ENCODE measurements at regions of chr12 and their contacts with region 1.

Region 1: DNA sequence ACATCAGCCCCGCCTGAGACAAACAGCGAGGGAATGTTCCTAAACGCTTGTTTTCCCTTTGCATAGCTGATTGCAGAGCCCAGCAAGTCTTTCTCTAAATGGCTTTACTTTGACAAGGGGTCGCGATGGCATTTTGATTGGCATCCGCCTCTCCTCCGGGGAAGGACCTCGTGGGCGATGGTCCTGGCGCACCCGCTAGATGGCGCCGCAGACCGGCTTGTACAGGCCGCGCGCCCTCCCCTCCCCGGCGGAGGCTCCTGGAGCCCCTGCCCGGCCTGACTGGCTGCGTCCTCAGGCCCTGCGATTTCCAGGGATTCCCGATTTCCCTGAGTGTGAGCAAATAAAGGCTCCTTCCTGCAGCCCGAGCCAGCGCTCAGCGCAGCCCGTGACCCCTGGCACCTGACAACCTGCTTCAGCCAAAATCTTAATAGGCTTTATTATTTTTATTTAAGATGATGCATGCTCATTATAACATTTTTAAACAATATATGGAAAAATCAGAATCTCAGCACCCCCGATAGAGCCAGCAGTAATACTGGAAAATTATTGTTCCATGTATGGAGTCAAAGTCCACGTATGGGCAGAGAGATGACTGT is 468.3 kb downstream of the AACS start:
- DNase-seq: peak; percentile 25
- H3K4me3 ChIP-seq: no peak overlapping the region
- H3K27ac ChIP-seq: no peak overlapping the region
- H3K4me1 ChIP-seq: no peaks in the 10 kb centered on the region
- H3K27me3 ChIP-seq: no peaks in the 10 kb centered on the region
- CTCF ChIP-seq: peak; percentile 84

Region 2: GRCh38 chr12:125172231-125172850 is 361.2 kb before region 1 on chr12:
- intact Hi-C with region 1: no loop called
- DNase-seq: no peak
- H3K4me3 ChIP-seq: no peak overlapping the region
- H3K27ac ChIP-seq: no peak overlapping the region
- H3K4me1 ChIP-seq: no peaks in the 10 kb centered on the region
- H3K27me3 ChIP-seq: no peaks in the 10 kb centered on the region
- CTCF ChIP-seq: no peak

Region 3: DNA sequence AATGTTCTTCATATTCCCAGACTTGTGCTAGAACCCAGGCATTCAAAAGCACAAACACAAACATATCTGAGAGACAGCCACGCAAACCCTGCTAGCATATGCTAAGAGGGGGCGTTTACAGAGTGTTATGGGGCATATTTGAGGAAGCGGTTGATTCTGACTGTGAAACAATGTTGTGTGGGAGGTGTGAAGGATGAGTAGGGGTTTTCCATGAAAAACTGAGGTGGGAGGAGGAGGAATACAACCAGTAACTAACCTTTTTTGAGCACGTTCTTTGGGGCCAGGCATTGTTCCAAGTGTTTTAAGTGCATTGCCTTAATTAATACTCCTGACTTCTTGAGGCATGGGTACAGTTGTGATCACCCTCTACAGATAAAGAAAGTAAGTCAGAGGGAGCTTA is 31.2 kb after region 1 on chr12:
- intact Hi-C with region 1: no loop called
- DNase-seq: no peak
- H3K4me3 ChIP-seq: no peak overlapping the region
- H3K27ac ChIP-seq: no peak overlapping the region
- H3K4me1 ChIP-seq: no peaks in the 10 kb centered on the region
- H3K27me3 ChIP-seq: no peaks in the 10 kb centered on the region
- CTCF ChIP-seq: no peak

Region 4: DNA sequence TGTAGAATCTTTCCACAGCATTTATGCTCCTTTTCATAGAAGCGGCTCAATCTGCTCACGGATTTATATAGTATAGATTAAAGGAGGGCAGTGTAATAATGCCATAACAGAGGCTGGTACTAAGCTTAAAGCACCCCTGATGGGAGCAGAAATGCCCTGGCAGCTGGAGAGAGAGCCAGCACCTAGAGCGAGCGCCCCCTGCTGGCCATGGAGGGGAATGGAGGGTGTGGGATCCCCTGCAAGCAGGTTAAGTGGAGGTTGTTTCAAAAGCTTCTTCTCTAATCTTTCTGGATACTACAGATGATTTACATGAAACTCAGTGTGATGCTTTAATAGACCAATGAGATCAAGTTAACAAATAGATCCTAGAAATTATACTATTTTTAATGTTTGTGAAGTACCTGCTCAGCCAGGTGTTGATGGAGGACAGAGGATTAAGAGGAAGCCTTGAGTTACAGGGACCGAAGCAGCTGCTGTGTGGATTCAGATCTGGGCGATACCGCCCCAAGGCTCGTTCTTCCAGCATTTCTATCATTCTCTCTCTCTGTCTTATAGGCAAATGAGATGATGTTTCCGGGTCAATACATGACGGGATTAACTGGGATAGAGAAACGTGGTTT is 1214.1 kb after region 1 on chr12:
- intact Hi-C with region 1: loop called (anchors 5 kb)
- DNase-seq: peak; percentile 34
- H3K4me3 ChIP-seq: no peak overlapping the region
- H3K27ac ChIP-seq: no peak overlapping the region
- H3K4me1 ChIP-seq: no peaks in the 10 kb centered on the region
- H3K27me3 ChIP-seq: no peaks in the 10 kb centered on the region
- CTCF ChIP-seq: peak; percentile 89

Region 5: DNA sequence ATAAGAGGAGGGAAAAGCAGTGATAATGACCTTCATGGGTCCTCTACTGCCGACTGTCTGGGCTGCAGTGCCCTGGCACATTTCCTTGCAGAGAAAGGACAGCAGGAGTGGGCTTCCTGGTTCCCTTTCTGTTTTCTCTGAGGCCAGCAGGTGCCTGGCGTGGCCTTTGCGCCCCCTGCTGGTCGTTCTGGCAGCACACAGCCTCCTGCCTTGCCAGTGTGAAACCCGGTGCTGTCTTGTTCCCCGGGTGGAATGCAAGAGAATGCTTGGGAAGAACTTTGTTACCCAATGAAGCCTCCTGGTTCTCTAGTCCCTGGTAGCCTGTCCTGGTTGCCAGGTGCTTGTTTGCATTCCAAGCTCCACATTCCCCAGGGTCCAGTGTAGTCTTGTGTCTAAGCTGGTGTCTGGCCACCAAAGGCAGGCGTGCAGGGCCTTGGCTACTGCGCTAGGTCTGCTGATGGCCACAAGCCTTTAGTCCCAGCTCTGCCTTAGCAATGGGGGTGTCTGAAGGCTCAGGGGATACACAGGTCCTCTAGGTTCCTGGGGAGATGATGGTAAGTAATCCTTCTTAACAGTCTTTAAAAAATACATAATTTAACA is 1341.0 kb after region 1 on chr12:
- intact Hi-C with region 1: loop called (anchors 10 kb)
- DNase-seq: peak; percentile 46
- H3K4me3 ChIP-seq: no peak overlapping the region
- H3K27ac ChIP-seq: no peak overlapping the region
- H3K4me1 ChIP-seq: no peaks in the 10 kb centered on the region
- H3K27me3 ChIP-seq: no peaks in the 10 kb centered on the region
- CTCF ChIP-seq: peak; percentile 90